ENCODE measurements at regions of chr12 and their contacts with region 1.

Region 1: GRCh38 chr12:107511292-107511691 is 174.3 kb upstream of the PWP1 start:
- DNase-seq: no peak
- ATAC-seq: no peak
- H3K4me3 Mint-ChIP-seq: no peak overlapping the region
- H3K27ac Mint-ChIP-seq: no peak overlapping the region
- H3K4me1 Mint-ChIP-seq: peaks cover 11% of the 10 kb centered on the region
- H3K27me3 Mint-ChIP-seq: no peaks in the 10 kb centered on the region

Region 2: DNA sequence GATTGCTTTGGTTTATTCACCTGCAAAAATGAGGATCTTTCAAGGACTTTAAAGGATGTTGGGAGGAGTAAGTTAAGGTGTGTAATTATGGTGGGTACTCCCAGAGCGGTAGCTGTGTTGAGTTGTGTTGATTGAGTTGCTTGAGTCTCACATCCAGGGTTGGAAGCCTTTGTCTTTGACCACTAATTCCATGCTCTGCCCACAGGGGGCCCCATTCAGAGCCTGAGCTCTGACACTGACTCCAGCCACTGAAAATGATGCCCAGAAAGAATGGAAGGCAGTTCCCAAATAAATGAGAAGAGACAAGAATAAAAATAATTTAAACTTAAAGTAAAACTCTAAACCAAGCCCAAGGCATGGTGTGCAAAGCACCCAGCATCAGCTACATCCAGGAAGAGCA is 63.1 kb before region 1 on chr12:
- CTCF ChIA-PET with region 1: no interaction called
- POLR2A ChIA-PET with region 1: no interaction called
- intact Hi-C with region 1: no loop called
- DNase-seq: peak; percentile 23
- ATAC-seq: peak; percentile 36
- H3K4me3 Mint-ChIP-seq: no peak overlapping the region
- H3K27ac Mint-ChIP-seq: no peak overlapping the region
- H3K4me1 Mint-ChIP-seq: peaks cover 3% of the 10 kb centered on the region
- H3K27me3 Mint-ChIP-seq: no peaks in the 10 kb centered on the region

Region 3: DNA sequence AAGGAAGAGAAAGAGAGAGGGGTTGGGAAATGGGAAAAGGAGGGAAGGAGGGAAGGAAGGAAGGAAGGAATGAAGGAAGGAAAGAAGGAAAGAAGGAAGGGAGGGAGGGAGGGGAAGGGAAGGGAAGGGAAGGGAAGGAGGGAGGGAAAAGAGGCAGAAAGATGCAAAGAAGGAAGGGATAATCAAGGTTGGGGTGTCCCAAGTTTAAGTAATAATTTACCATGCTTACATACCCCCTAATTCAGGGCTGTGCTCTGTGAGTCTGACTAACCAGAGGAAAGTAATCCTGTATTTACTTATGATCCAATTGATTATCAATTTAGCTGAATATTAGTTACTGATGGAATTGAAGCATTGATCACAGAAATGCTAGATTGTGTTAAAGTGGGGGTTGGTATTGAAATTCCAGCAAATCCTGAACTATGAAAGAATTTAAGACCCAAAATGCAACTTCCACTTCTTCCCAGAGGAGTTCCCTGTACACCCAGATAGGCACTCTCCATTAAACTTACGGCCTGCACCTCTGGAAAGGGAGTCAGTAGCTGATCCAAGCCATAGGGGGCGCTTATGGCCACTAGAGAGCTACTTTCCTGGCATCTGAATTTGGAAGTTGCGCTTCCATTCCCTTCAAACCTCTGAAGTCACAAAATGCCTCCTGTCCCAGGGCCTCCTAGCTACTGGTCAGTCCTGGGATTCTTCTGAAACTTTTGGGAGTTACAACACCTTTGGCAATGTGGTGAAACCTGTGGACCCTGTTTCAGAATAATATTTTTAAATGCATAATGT is 11.6 kb after region 1 on chr12:
- CTCF ChIA-PET with region 1: interaction called, 5 read pairs
- POLR2A ChIA-PET with region 1: no interaction called
- intact Hi-C with region 1: loop called in 1 of 2 experiments (anchors 1 kb)
- DNase-seq: no peak
- ATAC-seq: no peak
- H3K4me3 Mint-ChIP-seq: no peak overlapping the region
- H3K27ac Mint-ChIP-seq: no peak overlapping the region
- H3K4me1 Mint-ChIP-seq: no peaks in the 10 kb centered on the region
- H3K27me3 Mint-ChIP-seq: no peaks in the 10 kb centered on the region